Caco-2 (cell line): ENCODE measurements at regions of chr18 and their contacts with region 1.

Region 1: GRCh38 chr18:10682368-10682714 is 156.5 kb downstream of the NAPG start:
- DNase-seq: no peak
- H3K4me3 ChIP-seq: no peak overlapping the region
- H3K4me3 Mint-ChIP-seq: no peak overlapping the region
- H3K27ac Mint-ChIP-seq: no peak overlapping the region
- H3K4me1 ChIP-seq: no peaks in the 10 kb centered on the region
- H3K4me1 Mint-ChIP-seq: peaks cover 11% of the 10 kb centered on the region
- H3K27me3 ChIP-seq: peaks cover 1% of the 10 kb centered on the region; the same call in 1 of the 2 replicates
- H3K27me3 Mint-ChIP-seq: peaks cover 5% of the 10 kb centered on the region
- CTCF ChIP-seq: peak in 1 of 2 experiments; percentile 23

Region 2: DNA sequence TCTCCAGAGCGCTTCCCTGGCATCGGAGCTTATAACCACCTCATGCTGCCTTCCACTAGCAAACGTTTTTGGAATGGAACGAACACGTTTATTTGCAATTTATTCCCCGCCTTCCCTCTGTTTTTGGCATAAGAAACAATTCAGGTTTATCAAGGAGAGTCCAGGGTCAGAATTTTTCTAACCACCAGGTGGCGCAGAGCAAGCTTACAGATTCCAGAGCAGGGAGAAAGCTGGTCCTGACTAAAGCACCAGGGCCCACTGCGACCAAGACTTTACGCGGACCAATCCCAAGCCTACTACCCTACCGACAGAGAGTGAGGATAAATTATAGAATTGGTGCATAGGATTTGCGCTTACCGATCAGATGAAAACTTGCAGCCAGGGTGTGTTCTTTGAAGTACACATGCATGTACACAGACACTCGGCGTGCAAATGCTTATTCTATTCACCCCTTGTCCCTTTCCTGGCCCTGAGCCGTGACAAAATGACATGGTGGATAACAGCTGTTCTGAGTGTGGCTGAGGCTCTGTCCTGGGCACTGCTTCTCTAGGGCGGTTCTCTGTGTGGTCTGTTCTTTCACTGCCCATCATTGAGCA is 121.8 kb before region 1 on chr18:
- CTCF ChIA-PET with region 1: interaction called, 3 read pairs
- POLR2A ChIA-PET with region 1: no interaction called
- intact Hi-C with region 1: loop called (anchors 1 kb)
- DNase-seq: peak; percentile 69 to 77
- H3K4me3 ChIP-seq: no peak overlapping the region
- H3K4me3 Mint-ChIP-seq: no peak overlapping the region
- H3K27ac Mint-ChIP-seq: no peak overlapping the region
- H3K4me1 ChIP-seq: no peaks in the 10 kb centered on the region
- H3K4me1 Mint-ChIP-seq: no peaks in the 10 kb centered on the region
- H3K27me3 ChIP-seq: no peaks in the 10 kb centered on the region
- H3K27me3 Mint-ChIP-seq: no peaks in the 10 kb centered on the region
- CTCF ChIP-seq: peak; percentile 64 to 82